GM10248 (cell line): ENCODE measurements at regions of chr19 and their contacts with region 1.

Region 1: DNA sequence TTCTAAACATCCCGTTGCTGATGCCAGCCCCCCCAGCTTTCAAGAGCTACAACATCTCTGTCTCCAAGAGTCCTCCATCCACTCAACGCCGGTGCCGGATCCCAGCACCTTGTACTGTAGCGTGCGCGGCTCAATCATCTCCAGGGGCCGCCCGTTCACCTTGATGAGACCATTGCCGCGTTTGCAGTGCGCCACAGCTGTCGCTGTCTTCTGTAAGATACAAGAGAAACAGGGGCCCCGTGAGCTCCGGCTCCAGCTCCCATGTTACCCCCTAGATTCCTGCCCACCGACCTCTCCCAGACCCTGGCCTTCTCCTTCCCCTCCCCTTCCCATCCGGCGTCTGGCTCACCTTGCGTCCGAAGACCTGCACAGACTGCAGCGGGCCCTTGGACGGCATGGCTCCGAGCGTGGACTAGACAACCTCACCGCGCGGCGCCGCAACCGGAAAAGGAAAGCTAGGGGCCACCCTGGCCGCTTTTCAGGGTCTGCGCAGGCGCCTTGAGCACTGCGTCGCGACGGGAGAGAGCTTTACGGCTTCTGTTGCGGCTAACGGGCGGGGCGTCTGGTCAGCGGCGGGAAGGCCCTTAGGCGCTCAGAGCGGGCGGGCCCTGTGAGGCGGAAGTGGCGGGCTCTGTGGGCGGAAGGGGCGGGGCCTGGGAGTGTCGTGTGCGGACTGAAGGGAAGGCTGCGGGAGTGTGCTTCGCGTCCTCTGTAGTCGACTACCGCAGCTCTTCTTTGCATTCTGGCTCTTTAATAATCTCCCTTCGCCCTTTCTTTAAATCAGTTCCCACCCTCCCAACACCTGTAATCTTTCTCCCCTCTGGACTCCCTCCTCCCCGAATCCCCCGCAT is at the start of gene RPS16:
- DNase-seq: peak; percentile 97
- CTCF ChIP-seq: no peak

Region 2: GRCh38 chr19:39390755-39391592 is 44.8 kb before region 1 on chr19 and contains the starts of genes MED29 and PAF1:
- CTCF ChIA-PET with region 1: interaction called, 4 read pairs
- POLR2A ChIA-PET with region 1: interaction called, 14 read pairs
- DNase-seq: peak; percentile 99
- CTCF ChIP-seq: no peak

Region 3: GRCh38 chr19:39524495-39524894 is 88.8 kb after region 1 on chr19:
- CTCF ChIA-PET with region 1: no interaction called
- POLR2A ChIA-PET with region 1: no interaction called
- DNase-seq: no peak
- CTCF ChIP-seq: no peak